ENCODE measurements at regions of chr19 and their contacts with region 1.

Region 1: GRCh38 chr19:40444192-40445028 is at the start of gene SERTAD3:
- DNase-seq: peak; percentile 99
- H3K4me3 ChIP-seq: peak within 1 kb of the TSS; percentile 82 to 99 (median 96)
- H3K27ac ChIP-seq: peak within 1 kb of the TSS; percentile 93 to 100 (median 100)
- H3K4me1 ChIP-seq: peaks cover 0 to 40% (median 37%) of the 10 kb centered on the region in 4 donors
- H3K27me3 ChIP-seq: no peaks in the 10 kb centered on the region
- CTCF ChIP-seq: peak in 1 of 4 experiments; percentile 26
- EP300 ChIP-seq: no peak
- POLR2A ChIP-seq: peak; percentile 98 to 99
- total RNA-seq, gene SERTAD3: 15.5 to 34.2 (median 26.0) TPM

Region 2: DNA sequence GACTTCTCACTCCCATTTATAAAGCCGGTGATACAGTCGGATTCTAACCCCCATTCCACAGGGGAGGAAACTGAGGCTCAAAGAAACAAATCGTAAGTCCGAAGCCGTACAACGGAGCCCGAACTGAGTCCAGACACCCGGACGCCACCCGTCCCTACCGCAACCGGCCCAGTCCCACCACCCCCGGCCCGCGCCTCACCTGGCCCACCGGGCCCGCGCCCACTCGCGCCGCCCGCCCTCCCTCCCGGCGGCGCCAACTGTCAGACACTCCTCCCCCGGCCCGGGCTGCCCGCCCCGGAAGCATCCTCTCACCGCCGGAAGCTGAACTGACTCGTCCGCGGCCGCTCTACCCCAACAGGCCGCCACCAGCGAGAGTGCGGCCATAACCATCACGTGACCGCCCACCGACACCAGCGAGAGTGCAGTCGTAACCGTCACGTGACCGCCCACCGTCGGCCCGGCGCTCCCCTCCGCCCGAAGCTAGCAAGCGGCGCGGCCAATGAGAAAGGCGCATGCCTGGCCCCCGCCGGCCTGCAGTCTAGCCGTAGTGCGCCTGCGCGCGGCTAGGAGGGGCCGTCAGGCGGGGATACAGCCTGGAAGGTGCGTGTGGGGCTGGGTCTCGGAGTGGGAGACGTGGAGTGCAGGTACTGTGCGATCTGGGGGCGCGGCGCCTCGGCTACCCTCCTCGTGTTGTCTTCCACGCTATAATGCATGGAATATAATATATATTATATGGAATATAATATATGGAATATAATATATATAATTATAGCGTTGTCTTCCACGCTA is 96.1 kb before region 1 on chr19 and contains the starts of genes C19orf47 and PLD3:
- intact Hi-C with region 1: loop called (anchors 1 kb)
- DNase-seq: peak; percentile 100
- H3K4me3 ChIP-seq: peak within 1 kb of the TSS; percentile 69 to 90 (median 76)
- H3K27ac ChIP-seq: peak within 1 kb of the TSS; percentile 78 to 84 (median 84)
- H3K4me1 ChIP-seq: peaks cover 0 to 30% (median 22%) of the 10 kb centered on the region in 4 donors
- H3K27me3 ChIP-seq: no peaks in the 10 kb centered on the region
- CTCF ChIP-seq: no peak
- EP300 ChIP-seq: peak in 1 of 4 donors; percentile 80
- POLR2A ChIP-seq: peak; percentile 91 to 93
- total RNA-seq, gene C19orf47: 8.9 to 12.8 (median 11.5) TPM
- total RNA-seq, gene PLD3: 164 to 270 (median 230) TPM

Region 3: GRCh38 chr19:40425450-40426287 is 18.7 kb before region 1 on chr19 and contains the start of gene SERTAD1:
- intact Hi-C with region 1: loop called (anchors 1 kb)
- DNase-seq: peak; percentile 100
- H3K4me3 ChIP-seq: peak within 1 kb of the TSS; percentile 61 to 98 (median 86)
- H3K27ac ChIP-seq: peak within 1 kb of the TSS; percentile 95 to 100 (median 99)
- H3K4me1 ChIP-seq: peaks cover 0 to 47% (median 37%) of the 10 kb centered on the region in 4 donors
- H3K27me3 ChIP-seq: no peaks in the 10 kb centered on the region
- CTCF ChIP-seq: peak; percentile 64 to 93 (median 88)
- EP300 ChIP-seq: no peak
- POLR2A ChIP-seq: peak; percentile 94 to 98
- total RNA-seq, gene SERTAD1: 10.2 to 29.2 (median 15.7) TPM

Region 4: GRCh38 chr19:40465557-40466150 is 21.2 kb after region 1 on chr19 and contains the start of gene BLVRB:
- intact Hi-C with region 1: loop called (anchors 2 kb)
- DNase-seq: peak; percentile 100
- H3K4me3 ChIP-seq: peak within 1 kb of the TSS; percentile 59 to 87 (median 70)
- H3K27ac ChIP-seq: peak within 1 kb of the TSS; percentile 88 to 96 (median 92)
- H3K4me1 ChIP-seq: peaks cover 0 to 46% (median 36%) of the 10 kb centered on the region in 4 donors
- H3K27me3 ChIP-seq: no peaks in the 10 kb centered on the region
- CTCF ChIP-seq: no peak
- EP300 ChIP-seq: no peak
- POLR2A ChIP-seq: peak; percentile 58 to 92
- total RNA-seq, gene BLVRB: 115 to 232 (median 210) TPM

Region 5: GRCh38 chr19:40533508-40533907 is 89.1 kb after region 1 on chr19:
- intact Hi-C with region 1: no loop called
- DNase-seq: no peak
- H3K4me3 ChIP-seq: no peak overlapping the region
- H3K27ac ChIP-seq: no peak overlapping the region
- H3K4me1 ChIP-seq: peaks cover 0 to 18% (median 15%) of the 10 kb centered on the region in 4 donors
- H3K27me3 ChIP-seq: peaks cover 0 to 6% (median 6%) of the 10 kb centered on the region in 3 donors
- CTCF ChIP-seq: no peak
- EP300 ChIP-seq: no peak
- POLR2A ChIP-seq: no peak

Region 6: DNA sequence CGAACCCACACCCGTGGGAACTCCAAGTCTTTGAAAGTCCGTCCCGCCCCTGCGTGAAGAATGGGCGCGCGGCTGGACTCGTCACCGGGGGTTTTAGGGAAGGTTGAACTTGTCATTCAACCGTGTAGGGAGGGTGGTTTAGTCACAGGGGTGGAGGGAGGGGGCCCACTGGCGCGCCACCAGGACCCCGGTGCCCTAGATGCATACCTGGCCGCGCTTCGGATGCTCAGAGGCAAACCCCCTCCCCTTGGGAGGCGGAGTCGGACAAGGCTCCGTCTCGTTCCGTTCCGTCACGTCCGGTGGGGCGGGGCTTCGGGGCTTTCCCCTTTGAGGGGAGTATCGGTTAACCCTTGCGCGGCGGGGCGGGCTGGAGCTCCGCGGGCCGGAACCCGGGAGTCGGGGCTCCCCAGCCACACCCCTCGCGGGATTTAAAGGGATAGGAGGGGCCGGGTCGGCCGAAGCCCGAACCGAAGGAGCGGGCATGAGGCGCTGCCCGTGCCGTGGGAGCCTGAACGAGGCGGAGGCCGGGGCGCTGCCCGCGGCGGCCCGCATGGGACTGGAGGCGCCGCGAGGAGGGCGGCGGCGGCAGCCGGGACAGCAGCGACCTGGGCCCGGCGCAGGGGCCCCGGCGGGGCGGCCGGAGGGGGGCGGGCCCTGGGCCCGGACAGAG is 272.4 kb after region 1 on chr19 and contains the starts of genes COQ8B and ITPKC:
- intact Hi-C with region 1: loop called (anchors 10 kb)
- DNase-seq: peak; percentile 100
- H3K4me3 ChIP-seq: peak within 1 kb of the TSS; percentile 74 to 92 (median 82)
- H3K27ac ChIP-seq: peak within 1 kb of the TSS; percentile 95 to 99 (median 98)
- H3K4me1 ChIP-seq: peaks cover 0 to 69% (median 56%) of the 10 kb centered on the region in 4 donors
- H3K27me3 ChIP-seq: no peaks in the 10 kb centered on the region
- CTCF ChIP-seq: peak in 1 of 4 experiments; percentile 32
- EP300 ChIP-seq: peak in 1 of 4 donors; percentile 74
- POLR2A ChIP-seq: peak; percentile 85 to 91
- total RNA-seq, gene COQ8B: 33.2 to 59.3 (median 39.2) TPM
- total RNA-seq, gene ITPKC: 17.7 to 39.6 (median 23.1) TPM